ENCODE measurements at regions of chr4 and their contacts with region 1.

Region 1: DNA sequence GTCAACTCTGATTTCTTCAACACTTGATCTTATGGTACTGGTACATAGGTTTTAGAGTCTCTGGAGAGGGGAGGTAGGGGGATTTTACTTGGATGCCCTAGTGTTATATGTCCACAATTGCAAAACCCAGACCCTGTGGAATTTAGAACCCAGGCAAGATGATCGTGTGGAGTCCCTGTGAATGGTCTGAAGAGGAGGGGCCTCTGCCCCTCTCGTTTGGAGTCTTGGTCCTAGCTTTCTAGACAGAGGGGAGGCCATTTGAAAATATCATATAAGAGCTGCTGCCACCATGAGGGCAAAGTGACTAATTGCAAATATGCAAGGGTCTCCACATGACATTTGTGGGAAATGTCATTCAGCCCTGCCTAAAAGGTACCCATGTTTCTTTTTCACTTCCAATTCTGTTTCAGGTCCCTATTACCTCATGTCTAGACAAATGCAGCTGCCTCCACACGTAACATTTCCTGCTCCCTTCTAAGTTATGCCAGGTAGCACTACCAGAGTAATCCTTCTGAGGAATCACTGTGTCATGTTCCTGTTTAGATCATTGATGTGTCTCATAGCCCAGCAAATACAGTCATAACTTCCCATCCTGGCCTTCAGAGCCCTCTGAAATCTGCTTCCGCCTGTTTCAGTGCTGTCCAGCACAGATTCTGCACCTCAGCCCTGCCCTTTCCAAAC is 126.8 kb downstream of the KLHL8 start:
- DNase-seq: peak in 2 of 10 donors; percentile 41 to 46
- H3K4me3 ChIP-seq: no peak overlapping the region
- H3K27ac ChIP-seq: peak overlapping the region in 43 of 59 donors; percentile 3 to 75 (median 41)
- H3K27me3 ChIP-seq: no peaks in the 10 kb centered on the region
- CTCF ChIP-seq: peak; percentile 53 to 88 (median 77)

Region 2: GRCh38 chr4:86497980-86498862 is 595.4 kb before region 1 on chr4:
- intact Hi-C with region 1: loop called in 1 of 2 experiments (anchors 5 kb)
- DNase-seq: peak in 2 of 10 donors; percentile 7 to 10
- H3K4me3 ChIP-seq: peak overlapping the region in 19 of 59 donors; percentile 0 to 44 (median 17)
- H3K27ac ChIP-seq: peak overlapping the region in 49 of 59 donors; percentile 1 to 85 (median 62)
- H3K27me3 ChIP-seq: no peaks in the 10 kb centered on the region
- CTCF ChIP-seq: peak; percentile 59 to 91 (median 82)

Region 3: DNA sequence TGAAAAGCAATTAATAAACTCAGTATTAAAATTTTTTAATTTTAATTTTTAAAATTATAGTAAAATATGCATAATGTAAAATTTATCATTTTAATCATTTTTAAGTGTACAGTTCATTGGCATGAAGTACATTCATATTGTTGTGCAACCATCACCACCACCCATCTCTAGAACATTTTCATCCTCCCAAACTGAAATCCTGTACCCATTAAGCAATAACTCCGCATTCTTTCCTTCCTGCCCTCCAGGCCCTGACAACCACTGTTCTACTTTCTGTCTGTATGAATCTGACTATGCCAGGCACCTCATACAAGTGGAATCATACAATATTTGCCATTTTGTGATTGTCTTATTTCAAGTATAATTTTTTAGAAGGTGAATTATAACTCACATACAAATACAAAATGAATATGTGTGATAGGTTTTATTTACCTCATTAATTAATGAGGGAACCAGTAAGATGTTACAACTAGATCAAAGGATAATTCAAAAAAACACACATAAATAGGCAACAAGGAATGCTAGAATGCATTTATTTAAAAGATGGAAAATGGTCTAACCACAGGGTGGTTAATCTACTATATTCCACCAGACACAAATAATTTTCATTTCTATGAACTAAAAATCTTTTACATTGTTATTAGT is 171.9 kb before region 1 on chr4:
- intact Hi-C with region 1: loop called (anchors 2 kb)
- DNase-seq: no peak
- H3K4me3 ChIP-seq: no peak overlapping the region
- H3K27ac ChIP-seq: no peak overlapping the region
- H3K27me3 ChIP-seq: no peaks in the 10 kb centered on the region
- CTCF ChIP-seq: no peak

Region 4: GRCh38 chr4:86934771-86935565 is 158.6 kb before region 1 on chr4 and contains the start of gene AFF1:
- intact Hi-C with region 1: loop called in 1 of 2 experiments (anchors 5 kb)
- DNase-seq: peak; percentile 73 to 92 (median 88)
- H3K4me3 ChIP-seq: peak within 1 kb of the TSS; percentile 64 to 99 (median 93)
- H3K27ac ChIP-seq: peak within 1 kb of the TSS; percentile 66 to 96 (median 90)
- H3K27me3 ChIP-seq: no peaks in the 10 kb centered on the region
- CTCF ChIP-seq: peak; percentile 27 to 85 (median 63)
- total RNA-seq, gene AFF1: 37.6 to 89.2 (median 55.4) TPM

Region 5: GRCh38 chr4:87006676-87007527 is 86.7 kb before region 1 on chr4:
- intact Hi-C with region 1: loop called (anchors 5 kb)
- DNase-seq: peak; percentile 82 to 95 (median 90)
- H3K4me3 ChIP-seq: peak overlapping the region; percentile 55 to 96 (median 81)
- H3K27ac ChIP-seq: peak overlapping the region; percentile 88 to 99 (median 97)
- H3K27me3 ChIP-seq: no peaks in the 10 kb centered on the region
- CTCF ChIP-seq: peak in 43 of 56 donors; percentile 3 to 58 (median 36)